ENCODE measurements at regions of chr14 and their contacts with region 1.

Region 1: GRCh38 chr14:38125481-38126037 is 82.1 kb upstream of the SSTR1 start:
- DNase-seq: peak in 6 of 9 donors; percentile 5 to 33 (median 26)
- ATAC-seq: peak; percentile 61
- H3K4me3 ChIP-seq: no peak overlapping the region
- H3K4me3 Mint-ChIP-seq: peak overlapping the region in 6 of 10 donors; percentile 6 to 40 (median 19)
- H3K27ac ChIP-seq: no peak overlapping the region
- H3K27ac Mint-ChIP-seq: peak overlapping the region in 7 of 9 donors; percentile 35 to 89 (median 77)
- H3K4me1 ChIP-seq: peaks cover 4 to 35% of the 10 kb centered on the region in 2 donors
- H3K4me1 Mint-ChIP-seq: peaks cover 12 to 76% (median 47%) of the 10 kb centered on the region in 7 donors
- H3K27me3 ChIP-seq: no peaks in the 10 kb centered on the region
- H3K27me3 Mint-ChIP-seq: no peaks in the 10 kb centered on the region

Region 2: GRCh38 chr14:37945959-37946358 is 179.6 kb before region 1 on chr14:
- CTCF ChIA-PET with region 1: no interaction called
- POLR2A ChIA-PET with region 1: no interaction called
- intact Hi-C with region 1: no loop called
- DNase-seq: no peak
- ATAC-seq: no peak
- H3K4me3 ChIP-seq: no peak overlapping the region
- H3K4me3 Mint-ChIP-seq: no peak overlapping the region
- H3K27ac ChIP-seq: no peak overlapping the region
- H3K27ac Mint-ChIP-seq: no peak overlapping the region
- H3K4me1 ChIP-seq: no peaks in the 10 kb centered on the region
- H3K4me1 Mint-ChIP-seq: peaks cover 0 to 2% (median 0%) of the 10 kb centered on the region in 7 donors
- H3K27me3 ChIP-seq: no peaks in the 10 kb centered on the region
- H3K27me3 Mint-ChIP-seq: peaks cover 0 to 4% (median 0%) of the 10 kb centered on the region in 5 donors

Region 3: DNA sequence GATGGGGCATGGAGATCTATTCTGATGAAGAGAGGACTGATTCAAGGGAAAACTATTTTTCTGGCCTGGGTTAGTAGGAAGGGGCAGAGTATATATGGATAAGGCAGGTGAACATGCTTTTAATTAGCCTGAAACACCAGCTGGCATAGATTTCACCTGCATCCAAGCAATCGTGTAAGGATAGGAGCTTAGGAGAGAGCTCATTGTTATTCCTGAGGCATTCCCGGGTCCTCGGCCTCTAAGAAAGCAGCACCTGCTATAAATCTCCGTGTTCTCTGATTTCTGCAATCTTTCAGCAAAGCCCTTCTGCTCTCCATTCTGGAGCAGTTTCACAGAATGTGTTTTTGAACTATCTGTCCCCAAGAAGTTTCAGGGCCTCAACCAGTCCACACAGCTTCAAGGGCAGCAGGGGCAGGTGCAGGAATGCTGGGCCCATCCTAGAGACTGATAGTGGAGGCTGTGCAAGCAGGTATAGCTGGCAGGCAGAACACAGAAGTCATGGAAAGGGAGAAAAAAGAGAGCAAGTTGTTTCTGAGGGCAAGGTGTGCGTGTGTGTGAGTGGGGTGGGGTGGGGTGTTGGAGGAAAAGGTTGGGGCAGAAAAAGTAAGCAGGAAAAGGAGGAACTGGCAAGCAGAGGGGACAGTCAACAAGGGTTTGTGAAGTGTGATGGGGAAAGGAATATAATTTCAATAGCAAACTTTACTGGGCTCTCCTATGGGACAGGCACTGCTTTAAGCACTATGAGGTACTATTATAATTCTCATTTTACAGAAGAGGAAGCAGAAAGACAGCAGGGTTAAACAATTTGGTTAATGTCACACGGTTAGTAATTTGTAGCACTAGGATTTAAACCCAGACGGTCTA is 121.6 kb before region 1 on chr14:
- CTCF ChIA-PET with region 1: no interaction called
- POLR2A ChIA-PET with region 1: no interaction called
- intact Hi-C with region 1: loop called in 1 of 2 experiments (anchors 10 kb)
- DNase-seq: no peak
- ATAC-seq: no peak
- H3K4me3 ChIP-seq: no peak overlapping the region
- H3K4me3 Mint-ChIP-seq: no peak overlapping the region
- H3K27ac ChIP-seq: no peak overlapping the region
- H3K27ac Mint-ChIP-seq: peak overlapping the region in 2 of 9 donors; percentile 32 to 73
- H3K4me1 ChIP-seq: no peaks in the 10 kb centered on the region
- H3K4me1 Mint-ChIP-seq: peaks cover 0 to 17% (median 4%) of the 10 kb centered on the region in 7 donors
- H3K27me3 ChIP-seq: no peaks in the 10 kb centered on the region
- H3K27me3 Mint-ChIP-seq: no peaks in the 10 kb centered on the region

Region 4: GRCh38 chr14:38089123-38089522 is 36.4 kb before region 1 on chr14:
- CTCF ChIA-PET with region 1: no interaction called
- POLR2A ChIA-PET with region 1: no interaction called
- intact Hi-C with region 1: loop called in 1 of 2 experiments (anchors 2 kb)
- DNase-seq: no peak
- ATAC-seq: no peak
- H3K4me3 ChIP-seq: peak overlapping the region; percentile 59
- H3K4me3 Mint-ChIP-seq: peak overlapping the region in 9 of 10 donors; percentile 62 to 91 (median 82)
- H3K27ac ChIP-seq: peak overlapping the region; percentile 64
- H3K27ac Mint-ChIP-seq: peak overlapping the region in 8 of 9 donors; percentile 77 to 97 (median 88)
- H3K4me1 ChIP-seq: peaks cover 4 to 27% of the 10 kb centered on the region in 2 donors
- H3K4me1 Mint-ChIP-seq: peaks cover 0 to 56% (median 22%) of the 10 kb centered on the region in 7 donors
- H3K27me3 ChIP-seq: no peaks in the 10 kb centered on the region
- H3K27me3 Mint-ChIP-seq: no peaks in the 10 kb centered on the region

Region 5: DNA sequence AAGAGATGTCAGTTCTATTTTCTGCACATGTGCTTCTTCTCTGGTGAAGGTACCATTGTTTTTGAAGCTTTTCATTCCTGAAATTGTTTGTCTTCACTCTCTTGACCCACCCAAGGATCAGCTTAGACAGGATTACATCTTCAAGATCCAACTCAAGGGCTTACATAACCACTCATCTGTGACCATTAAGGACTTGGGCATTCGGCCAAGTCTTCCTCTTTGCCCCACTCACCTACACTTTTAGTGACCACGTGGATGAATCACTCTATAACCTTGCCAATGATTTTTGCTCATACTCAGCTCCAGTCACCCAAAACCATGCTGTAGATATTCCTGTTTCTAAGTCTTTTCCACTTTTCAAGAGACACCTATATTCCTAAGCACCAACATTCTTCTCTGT is 45.6 kb after region 1 on chr14:
- CTCF ChIA-PET with region 1: no interaction called
- POLR2A ChIA-PET with region 1: no interaction called
- intact Hi-C with region 1: no loop called
- DNase-seq: no peak
- ATAC-seq: no peak
- H3K4me3 ChIP-seq: no peak overlapping the region
- H3K4me3 Mint-ChIP-seq: no peak overlapping the region
- H3K27ac ChIP-seq: no peak overlapping the region
- H3K27ac Mint-ChIP-seq: peak overlapping the region in 1 of 9 donors; percentile 7
- H3K4me1 ChIP-seq: no peaks in the 10 kb centered on the region
- H3K4me1 Mint-ChIP-seq: peaks cover 0 to 4% (median 0%) of the 10 kb centered on the region in 7 donors
- H3K27me3 ChIP-seq: no peaks in the 10 kb centered on the region
- H3K27me3 Mint-ChIP-seq: peaks cover 0 to 7% (median 0%) of the 10 kb centered on the region in 5 donors

Measured in naive thymus-derived CD4-positive, alpha-beta T cell (primary cell).